SK-N-SH (cell line): ENCODE measurements at regions of chr1 and their contacts with region 1.

Region 1: DNA sequence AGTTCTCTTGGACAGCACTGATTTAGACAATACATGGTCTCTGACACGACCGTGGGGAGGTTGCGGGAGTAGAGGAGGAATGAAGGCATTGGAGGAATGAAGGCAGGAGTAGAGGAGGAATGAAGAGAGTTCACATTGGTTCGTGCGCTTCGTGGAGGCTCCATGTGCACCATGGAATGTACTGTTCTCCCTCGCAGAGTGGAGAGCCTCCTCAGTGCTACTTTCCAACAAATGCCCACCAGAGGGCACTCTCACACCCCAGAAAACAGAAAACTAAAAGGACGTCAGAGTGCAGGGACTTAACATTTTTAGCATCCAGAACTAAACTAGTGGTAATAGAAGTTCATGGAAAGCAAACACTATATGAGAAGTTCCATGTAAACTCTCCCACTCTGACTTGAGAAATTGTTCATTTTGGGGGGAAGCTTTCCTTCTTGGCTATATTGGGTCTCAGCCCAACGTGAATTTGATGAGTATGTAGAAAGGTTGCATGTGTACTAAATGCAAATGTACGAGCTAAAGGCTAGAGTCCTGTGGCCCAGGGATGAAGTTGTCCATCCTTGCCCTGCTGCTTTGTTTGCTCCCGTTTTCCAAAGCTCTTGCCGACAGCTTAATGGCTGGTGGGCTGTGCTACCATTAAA is 211.6 kb downstream of the LMX1A start:
- DNase-seq: peak; percentile 38
- H3K4me3 ChIP-seq: no peak overlapping the region; a peak in 1 of 4 replicates
- H3K27ac ChIP-seq: no peak overlapping the region
- H3K4me1 ChIP-seq: no peaks in the 10 kb centered on the region
- H3K27me3 ChIP-seq: no peaks in the 10 kb centered on the region
- CTCF ChIP-seq: peak; percentile 82
- EP300 ChIP-seq: no peak
- RAD21 ChIP-seq: peak; percentile 62

Region 2: DNA sequence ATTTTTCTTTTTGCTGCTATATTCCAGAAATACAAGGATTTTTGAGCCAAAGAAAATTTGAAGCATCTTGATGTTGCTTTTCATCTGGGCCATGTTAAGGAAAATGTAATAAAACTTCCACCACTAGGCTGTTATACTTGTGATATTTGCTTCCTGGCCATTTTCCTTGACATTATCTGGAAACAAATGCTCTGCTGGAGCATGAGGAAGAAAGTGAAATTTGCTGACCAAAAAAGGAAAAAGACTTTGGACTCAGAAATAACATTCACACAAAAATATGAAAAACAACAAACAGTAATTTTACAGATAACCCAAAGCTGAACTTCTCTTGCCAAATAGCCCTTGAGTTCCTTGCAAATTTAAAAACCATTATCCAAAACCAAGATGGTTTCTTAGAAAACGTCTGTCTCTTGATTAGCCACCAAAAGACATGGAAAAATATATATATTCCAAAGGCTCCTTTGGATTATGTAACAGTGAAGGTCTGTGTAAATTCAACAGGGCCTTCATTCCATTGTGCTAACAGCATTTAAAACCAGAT is 132.8 kb before region 1 on chr1:
- CTCF ChIA-PET with region 1: no interaction called
- POLR2A ChIA-PET with region 1: no interaction called
- DNase-seq: no peak
- H3K4me3 ChIP-seq: no peak overlapping the region
- H3K27ac ChIP-seq: no peak overlapping the region
- H3K4me1 ChIP-seq: no peaks in the 10 kb centered on the region
- H3K27me3 ChIP-seq: no peaks in the 10 kb centered on the region
- CTCF ChIP-seq: no peak
- EP300 ChIP-seq: no peak
- RAD21 ChIP-seq: no peak

Region 3: DNA sequence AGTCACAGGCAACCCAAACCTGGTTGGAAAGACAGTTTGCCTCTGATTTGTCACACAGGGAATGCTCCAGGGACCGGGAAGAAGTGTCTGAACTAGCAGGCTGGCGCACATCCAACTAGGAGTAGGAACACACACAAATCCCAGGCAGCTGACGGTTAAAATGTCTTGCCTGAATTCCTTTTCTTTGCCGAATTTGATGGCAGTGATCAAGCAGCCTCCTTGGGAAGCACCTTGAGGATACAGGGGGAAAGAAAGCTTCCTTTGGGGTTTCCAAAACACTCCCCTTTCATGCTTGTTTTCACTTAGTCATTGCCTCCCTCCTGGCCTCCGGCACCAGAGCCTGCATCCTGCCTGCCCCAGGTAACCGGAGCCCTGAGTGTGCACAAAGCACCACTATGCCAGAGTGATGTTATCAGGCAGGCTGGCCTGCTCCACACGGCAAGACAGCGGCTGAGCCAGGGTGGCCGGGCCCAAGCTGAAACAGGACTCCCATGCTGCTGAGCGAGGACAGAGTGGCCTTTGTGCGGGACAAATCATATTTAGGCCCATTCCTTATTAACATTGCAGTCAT is 17.9 kb after region 1 on chr1:
- CTCF ChIA-PET with region 1: interaction called, 11 read pairs
- POLR2A ChIA-PET with region 1: no interaction called
- DNase-seq: peak; percentile 6
- H3K4me3 ChIP-seq: no peak overlapping the region
- H3K27ac ChIP-seq: no peak overlapping the region
- H3K4me1 ChIP-seq: peaks cover 0 to 4% of the 10 kb centered on the region in 2 experiments; a peak in 1 of 4 replicates
- H3K27me3 ChIP-seq: no peaks in the 10 kb centered on the region
- CTCF ChIP-seq: no peak
- EP300 ChIP-seq: no peak
- RAD21 ChIP-seq: no peak